Natural killer cell (primary cell): ENCODE measurements at regions of chr11 and their contacts with region 1.

Region 1: GRCh38 chr11:63614136-63614664 is at the start of gene PLAAT3:
- DNase-seq: peak; percentile 39 to 50
- ATAC-seq: peak; percentile 52 to 66 (median 61)
- H3K4me3 ChIP-seq: peak within 1 kb of the TSS; percentile 50
- H3K4me3 Mint-ChIP-seq: peak within 1 kb of the TSS; percentile 93
- H3K27ac ChIP-seq: peak within 1 kb of the TSS; percentile 67
- H3K27ac Mint-ChIP-seq: peak within 1 kb of the TSS; percentile 91 to 94
- H3K4me1 ChIP-seq: peaks cover 19% of the 10 kb centered on the region
- H3K4me1 Mint-ChIP-seq: peaks cover 30 to 43% of the 10 kb centered on the region in 2 donors
- H3K27me3 ChIP-seq: no peaks in the 10 kb centered on the region
- H3K27me3 Mint-ChIP-seq: no peaks in the 10 kb centered on the region
- CTCF ChIP-seq: no peak
- total RNA-seq, gene PLAAT3: 32.5 to 34.1 (median 34.1) TPM

Region 2: DNA sequence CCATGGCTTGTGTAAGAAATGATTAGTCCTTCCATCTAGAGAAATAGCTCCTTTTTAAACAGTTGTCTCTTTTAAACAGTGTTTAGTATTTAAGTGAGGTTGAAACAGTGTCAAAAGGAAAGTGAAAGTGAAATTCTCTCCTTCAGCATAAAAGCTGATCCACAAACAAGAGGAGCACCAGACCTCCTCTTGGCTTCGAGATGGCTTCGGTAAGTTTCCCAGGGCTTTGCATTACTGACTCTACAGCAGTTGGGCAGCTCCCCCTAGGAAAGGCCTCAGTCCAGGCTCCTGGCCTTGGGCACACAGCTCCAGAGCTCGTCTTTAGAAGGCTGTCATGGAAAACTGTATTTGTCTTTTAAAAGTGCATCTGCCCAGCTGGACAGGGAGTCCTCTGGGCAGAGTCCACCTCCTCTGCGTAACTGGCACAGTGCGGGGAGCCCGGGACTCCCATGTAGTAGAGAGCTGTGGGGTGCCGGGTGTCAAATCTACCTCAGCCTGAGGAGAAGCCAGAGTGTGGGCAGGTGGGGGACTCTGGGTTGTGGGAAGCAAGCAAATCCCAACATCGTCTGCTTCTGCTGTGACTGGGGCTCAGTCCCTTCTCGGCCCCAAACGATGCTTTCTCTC is 77.4 kb before region 1 on chr11 and contains the start of gene PLAAT4:
- intact Hi-C with region 1: loop called (anchors 5 kb)
- DNase-seq: peak; percentile 52 to 77
- ATAC-seq: peak; percentile 59 to 71 (median 64)
- H3K4me3 ChIP-seq: peak within 1 kb of the TSS; percentile 75
- H3K4me3 Mint-ChIP-seq: peak within 1 kb of the TSS; percentile 96
- H3K27ac ChIP-seq: peak within 1 kb of the TSS; percentile 86
- H3K27ac Mint-ChIP-seq: peak within 1 kb of the TSS; percentile 93 to 97
- H3K4me1 ChIP-seq: peaks cover 76% of the 10 kb centered on the region
- H3K4me1 Mint-ChIP-seq: peaks cover 86 to 94% of the 10 kb centered on the region in 2 donors
- H3K27me3 ChIP-seq: no peaks in the 10 kb centered on the region
- H3K27me3 Mint-ChIP-seq: no peaks in the 10 kb centered on the region
- CTCF ChIP-seq: no peak
- total RNA-seq, gene PLAAT4: 204 to 215 (median 210) TPM

Region 3: GRCh38 chr11:63553741-63554151 is 60.5 kb before region 1 on chr11:
- intact Hi-C with region 1: loop called (anchors 5 kb)
- DNase-seq: peak; percentile 71 to 80
- ATAC-seq: peak; percentile 77 to 86 (median 86)
- H3K4me3 ChIP-seq: no peak overlapping the region
- H3K4me3 Mint-ChIP-seq: peak overlapping the region; percentile 85
- H3K27ac ChIP-seq: peak overlapping the region; percentile 93
- H3K27ac Mint-ChIP-seq: peak overlapping the region; percentile 97 to 98
- H3K4me1 ChIP-seq: peaks cover 48% of the 10 kb centered on the region
- H3K4me1 Mint-ChIP-seq: peaks cover 58 to 60% of the 10 kb centered on the region in 2 donors
- H3K27me3 ChIP-seq: no peaks in the 10 kb centered on the region
- H3K27me3 Mint-ChIP-seq: no peaks in the 10 kb centered on the region
- CTCF ChIP-seq: no peak

Region 4: GRCh38 chr11:63573881-63574855 is 40.0 kb before region 1 on chr11:
- intact Hi-C with region 1: loop called (anchors 5 kb)
- DNase-seq: peak in 1 of 2 donors; percentile 76
- ATAC-seq: peak; percentile 89 to 90 (median 89)
- H3K4me3 ChIP-seq: peak overlapping the region; percentile 12
- H3K4me3 Mint-ChIP-seq: peak overlapping the region; percentile 85
- H3K27ac ChIP-seq: peak overlapping the region; percentile 86
- H3K27ac Mint-ChIP-seq: peak overlapping the region; percentile 91 to 93
- H3K4me1 ChIP-seq: peaks cover 18% of the 10 kb centered on the region
- H3K4me1 Mint-ChIP-seq: peaks cover 48 to 50% of the 10 kb centered on the region in 2 donors
- H3K27me3 ChIP-seq: no peaks in the 10 kb centered on the region
- H3K27me3 Mint-ChIP-seq: no peaks in the 10 kb centered on the region
- CTCF ChIP-seq: no peak